Mammary epithelial cell (primary cell): ENCODE measurements at regions of chr13 and their contacts with region 1.

Region 1: DNA sequence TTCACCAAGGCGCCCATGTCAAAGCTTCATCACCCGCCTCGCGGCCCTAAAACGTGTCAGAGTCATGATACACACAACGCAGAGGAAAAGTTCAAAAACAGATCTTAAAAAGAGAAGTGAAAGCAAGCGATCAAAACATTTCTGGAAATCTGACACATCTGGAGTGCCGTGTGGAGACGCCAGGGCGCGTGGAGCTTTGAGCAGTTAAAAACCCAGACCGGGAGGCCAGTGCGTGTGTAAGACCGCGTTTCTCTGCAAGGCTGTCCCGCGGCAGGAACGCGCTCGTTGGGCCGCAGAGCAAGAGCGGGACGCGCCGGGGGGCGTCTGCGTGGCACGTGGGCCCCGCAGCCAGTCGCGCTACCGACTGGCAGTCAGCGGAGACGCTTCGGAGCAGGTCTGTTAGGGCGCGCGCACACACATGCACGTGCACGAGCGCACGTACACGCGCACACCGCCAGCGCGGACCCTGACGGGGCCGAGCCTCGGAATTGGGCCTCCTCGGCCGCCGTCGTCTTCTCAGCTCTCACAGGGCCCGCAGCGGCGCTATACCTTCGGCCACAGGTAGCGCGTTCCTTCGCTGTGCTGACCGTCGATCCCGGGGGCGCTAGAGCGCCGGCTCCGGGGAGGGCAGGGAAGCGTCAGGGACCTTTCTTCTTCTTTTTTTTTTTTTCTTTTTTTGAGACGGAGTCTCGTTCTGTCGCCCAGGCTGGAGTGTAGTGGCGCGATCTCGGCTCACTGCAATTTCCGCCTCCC is 35.8 kb downstream of the RNF6 start:
- DNase-seq: peak; percentile 92
- H3K4me3 ChIP-seq: peak overlapping the region; percentile 58 to 69 (median 63)
- H3K27ac ChIP-seq: no peak overlapping the region
- H3K4me1 ChIP-seq: peaks cover 10% of the 10 kb centered on the region
- H3K27me3 ChIP-seq: no peaks in the 10 kb centered on the region
- CTCF ChIP-seq: peak; percentile 34 to 76

Region 2: DNA sequence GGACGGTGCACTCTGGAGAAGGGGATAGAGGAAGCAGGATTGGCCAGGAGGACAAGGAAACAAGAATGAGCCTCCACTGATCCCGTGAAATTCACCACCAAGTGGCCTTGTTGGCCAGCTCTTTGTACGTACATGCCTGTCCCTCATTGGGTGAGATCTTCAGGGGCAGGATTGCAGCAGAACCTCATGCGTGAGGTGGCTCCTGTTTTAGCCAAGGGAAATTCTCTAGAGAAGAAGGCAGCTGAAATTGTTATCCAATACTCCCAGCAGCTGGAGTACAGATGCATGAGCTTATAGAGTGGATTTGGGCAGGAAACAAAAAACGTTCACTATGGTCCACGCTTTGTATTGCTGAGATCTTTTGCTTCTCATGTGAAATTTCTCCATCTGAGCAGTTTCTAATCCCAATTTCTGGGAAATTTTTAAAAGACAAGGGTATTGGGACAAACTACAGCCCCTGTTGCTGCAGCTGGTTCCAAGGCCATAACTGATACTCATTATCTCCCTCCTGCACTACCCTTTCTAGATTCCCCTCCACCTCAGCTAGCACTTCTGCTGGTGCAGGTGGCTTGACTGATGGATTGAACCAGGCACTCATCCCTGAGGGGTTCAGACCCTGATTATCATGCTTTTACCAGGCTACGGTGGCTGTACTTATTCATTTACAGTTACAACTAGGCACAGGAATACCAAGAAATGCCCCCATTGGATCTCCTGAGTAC is 39.8 kb after region 1 on chr13:
- CTCF ChIA-PET with region 1: no interaction called
- dilution Hi-C with region 1: no loop called
- in situ Hi-C with region 1: no loop called
- intact Hi-C with region 1: no loop called
- DNase-seq: no peak
- H3K4me3 ChIP-seq: no peak overlapping the region
- H3K27ac ChIP-seq: no peak overlapping the region
- H3K4me1 ChIP-seq: peaks cover 4% of the 10 kb centered on the region
- H3K27me3 ChIP-seq: no peaks in the 10 kb centered on the region
- CTCF ChIP-seq: no peak

Region 3: DNA sequence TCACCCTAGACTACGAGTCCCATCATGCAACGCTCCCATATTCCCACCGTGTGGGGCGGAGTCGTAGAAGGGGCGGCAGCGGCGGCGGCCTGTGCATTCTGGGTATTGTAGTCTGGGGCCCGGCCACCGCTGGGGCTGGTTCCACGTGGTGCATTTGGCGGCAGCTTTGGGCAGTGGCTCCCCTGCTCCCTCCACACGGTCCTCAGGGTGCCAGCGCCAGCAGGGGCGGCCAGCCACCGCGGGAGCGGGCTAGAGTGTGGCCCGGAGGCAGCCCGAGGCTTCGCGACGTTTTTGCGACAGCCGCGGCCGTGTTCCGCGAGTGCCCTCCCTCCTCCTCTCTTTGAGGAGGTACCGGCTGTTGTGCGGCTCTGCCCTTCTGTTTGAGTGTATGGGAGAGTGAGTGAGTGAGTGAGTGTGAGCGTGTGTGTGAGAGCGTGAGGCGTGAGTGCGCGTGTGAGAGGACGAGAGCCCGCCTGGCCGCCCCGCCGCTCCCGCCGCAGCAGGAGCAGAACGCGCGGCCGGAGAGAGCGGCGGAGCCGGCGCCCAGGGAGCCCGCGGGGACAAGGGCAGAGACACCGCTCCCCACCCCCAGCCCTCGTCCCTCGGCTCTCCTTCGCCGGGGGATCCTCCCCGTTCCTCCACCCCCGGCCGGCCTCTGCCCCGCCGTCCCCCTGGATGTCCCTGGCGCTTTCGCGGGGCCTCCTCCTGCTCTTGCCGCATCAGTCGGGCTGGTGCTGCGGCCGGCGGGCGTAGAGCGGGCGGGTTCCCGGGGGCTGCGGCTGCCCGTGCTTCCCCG is 67.7 kb after region 1 on chr13 and contains the start of gene CDK8:
- CTCF ChIA-PET with region 1: no interaction called
- dilution Hi-C with region 1: no loop called
- in situ Hi-C with region 1: no loop called
- intact Hi-C with region 1: loop called (anchors 2 kb)
- DNase-seq: peak; percentile 95
- H3K4me3 ChIP-seq: peak within 1 kb of the TSS; percentile 74 to 90 (median 84)
- H3K27ac ChIP-seq: peak within 1 kb of the TSS; percentile 58
- H3K4me1 ChIP-seq: peaks cover 9% of the 10 kb centered on the region
- H3K27me3 ChIP-seq: no peaks in the 10 kb centered on the region
- CTCF ChIP-seq: no peak
- total RNA-seq, gene CDK8: 22.0 to 23.6 TPM

Region 4: DNA sequence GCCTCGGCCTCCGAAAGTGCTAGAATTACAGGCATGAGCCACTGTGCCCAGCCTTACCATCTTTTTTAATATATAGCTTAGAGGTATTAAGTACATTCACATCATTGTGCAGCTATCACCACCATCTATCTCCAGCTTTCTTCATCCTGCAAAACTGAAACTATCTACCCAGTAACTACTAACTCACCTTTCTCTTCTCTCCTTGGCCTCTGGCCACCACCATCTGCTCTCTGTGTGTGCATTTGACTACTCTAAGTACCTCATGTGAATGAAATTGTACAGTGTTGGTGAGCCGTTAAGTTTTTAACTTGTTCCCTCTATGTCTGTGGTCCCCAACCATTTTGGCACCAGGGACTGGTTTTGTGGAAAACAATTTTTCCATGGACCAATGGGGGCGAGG is 123.7 kb after region 1 on chr13:
- CTCF ChIA-PET with region 1: no interaction called
- dilution Hi-C with region 1: no loop called
- in situ Hi-C with region 1: no loop called
- intact Hi-C with region 1: no loop called
- DNase-seq: no peak
- H3K4me3 ChIP-seq: no peak overlapping the region
- H3K27ac ChIP-seq: no peak overlapping the region
- H3K4me1 ChIP-seq: peaks cover 4% of the 10 kb centered on the region
- H3K27me3 ChIP-seq: no peaks in the 10 kb centered on the region
- CTCF ChIP-seq: no peak

Region 5: GRCh38 chr13:26449058-26449848 is 263.0 kb after region 1 on chr13:
- CTCF ChIA-PET with region 1: interaction called, 3 read pairs
- dilution Hi-C with region 1: no loop called
- in situ Hi-C with region 1: no loop called
- intact Hi-C with region 1: loop called (anchors 1 kb)
- DNase-seq: peak; percentile 19
- H3K4me3 ChIP-seq: no peak overlapping the region
- H3K27ac ChIP-seq: no peak overlapping the region
- H3K4me1 ChIP-seq: peaks cover 7% of the 10 kb centered on the region
- H3K27me3 ChIP-seq: no peaks in the 10 kb centered on the region
- CTCF ChIP-seq: peak; percentile 6 to 28

Region 6: GRCh38 chr13:26498656-26499591 is 312.6 kb after region 1 on chr13:
- CTCF ChIA-PET with region 1: interaction called, 39 read pairs
- dilution Hi-C with region 1: loop called (anchors 25 kb)
- in situ Hi-C with region 1: loop called in 1 of 2 experiments (anchors 10 kb)
- intact Hi-C with region 1: loop called (anchors 1 kb)
- DNase-seq: no peak
- H3K4me3 ChIP-seq: no peak overlapping the region
- H3K27ac ChIP-seq: no peak overlapping the region
- H3K4me1 ChIP-seq: peaks cover 21% of the 10 kb centered on the region
- H3K27me3 ChIP-seq: no peaks in the 10 kb centered on the region
- CTCF ChIP-seq: no peak

Region 7: GRCh38 chr13:26872525-26873385 is 686.5 kb after region 1 on chr13:
- CTCF ChIA-PET with region 1: no interaction called
- dilution Hi-C with region 1: no loop called
- in situ Hi-C with region 1: no loop called
- intact Hi-C with region 1: loop called (anchors 1 kb)
- DNase-seq: peak; percentile 24
- H3K4me3 ChIP-seq: no peak overlapping the region
- H3K27ac ChIP-seq: no peak overlapping the region
- H3K4me1 ChIP-seq: no peaks in the 10 kb centered on the region
- H3K27me3 ChIP-seq: no peaks in the 10 kb centered on the region
- CTCF ChIP-seq: peak; percentile 84 to 93